ENCODE measurements at regions of chr4 and their contacts with region 1.

Region 1: DNA sequence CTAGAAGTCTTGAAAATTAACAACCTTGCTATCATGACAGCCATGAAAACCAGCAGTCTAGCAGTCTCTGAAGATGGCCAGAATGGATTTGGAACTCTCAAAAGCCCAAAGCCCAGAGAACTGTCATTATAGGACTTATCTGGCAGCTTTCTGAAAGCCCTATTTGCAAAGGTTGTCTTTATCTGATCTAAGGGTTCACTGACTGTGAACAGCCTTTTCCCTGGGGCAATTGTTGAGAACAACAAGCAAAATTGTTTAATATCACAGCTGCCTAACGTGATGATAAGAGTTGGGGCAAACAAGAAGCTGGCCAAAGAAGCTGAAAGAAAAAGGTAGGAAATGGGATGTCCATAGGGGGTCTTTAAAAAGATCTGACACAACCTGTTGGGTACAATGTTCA is 20.9 kb upstream of the KLHL8 start:
- DNase-seq: peak in 1 of 2 experiments; percentile 59
- H3K4me3 ChIP-seq: no peak overlapping the region
- H3K27ac ChIP-seq: no peak overlapping the region
- H3K4me1 ChIP-seq: peaks cover 10% of the 10 kb centered on the region
- H3K27me3 ChIP-seq: no peaks in the 10 kb centered on the region
- CTCF ChIP-seq: no peak

Region 2: GRCh38 chr4:86233681-86234080 is 1007.7 kb before region 1 on chr4:
- CTCF ChIA-PET with region 1: no interaction called
- POLR2A ChIA-PET with region 1: interaction called, 10 read pairs
- intact Hi-C with region 1: no loop called
- DNase-seq: peak; percentile 7 to 35
- H3K4me3 ChIP-seq: no peak overlapping the region
- H3K27ac ChIP-seq: no peak overlapping the region
- H3K4me1 ChIP-seq: no peaks in the 10 kb centered on the region
- H3K27me3 ChIP-seq: no peaks in the 10 kb centered on the region
- CTCF ChIP-seq: no peak

Region 3: DNA sequence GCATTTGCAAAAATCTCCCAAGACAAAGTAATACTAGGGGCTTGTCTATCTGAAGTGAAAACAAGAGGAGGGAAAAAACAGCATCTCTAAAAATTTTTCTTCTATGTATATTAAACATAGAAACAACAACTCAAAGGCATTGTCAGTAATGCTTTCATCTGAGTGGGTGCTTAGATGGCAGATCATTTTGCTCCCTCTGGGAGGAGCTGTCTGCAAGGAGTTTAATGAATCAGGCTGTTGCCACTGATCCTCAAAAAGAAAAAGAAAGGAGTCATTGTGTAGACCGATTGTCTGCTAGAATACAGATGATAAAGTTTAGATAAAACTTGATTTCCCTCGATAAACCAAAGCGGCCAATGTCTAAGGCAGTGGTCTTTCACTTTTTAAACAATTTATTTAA is 28.8 kb after region 1 on chr4:
- CTCF ChIA-PET with region 1: no interaction called
- POLR2A ChIA-PET with region 1: no interaction called
- intact Hi-C with region 1: no loop called
- DNase-seq: peak; percentile 5 to 38
- H3K4me3 ChIP-seq: no peak overlapping the region
- H3K27ac ChIP-seq: no peak overlapping the region
- H3K4me1 ChIP-seq: no peaks in the 10 kb centered on the region
- H3K27me3 ChIP-seq: no peaks in the 10 kb centered on the region
- CTCF ChIP-seq: peak; percentile 57

Measured in PC-9 (cell line).